K562 (cell line): ENCODE measurements at regions of chr10 and their contacts with region 1.

Region 1: GRCh38 chr10:101602761-101603398 is 14.8 kb downstream of the DPCD start:
- DNase-seq: peak; percentile 72 to 83 (median 76)
- ATAC-seq: peak; percentile 99
- H3K4me3 ChIP-seq: no peak overlapping the region
- H3K27ac ChIP-seq: no peak overlapping the region
- H3K4me1 ChIP-seq: peaks cover 7 to 9% of the 10 kb centered on the region in 2 experiments; a peak in 2 of 5 replicates
- H3K27me3 ChIP-seq: no peaks in the 10 kb centered on the region
- CTCF ChIP-seq: peak; percentile 91 to 97 (median 95)
- EP300 ChIP-seq: no peak
- POLR2A ChIP-seq: no peak
- RAD21 ChIP-seq: peak; percentile 81 to 88

Region 2: GRCh38 chr10:101587725-101588653 is 14.9 kb before region 1 on chr10 and contains the starts of genes DPCD and POLL:
- CTCF ChIA-PET with region 1: no interaction called
- POLR2A ChIA-PET with region 1: no interaction called
- in situ Hi-C with region 1: no loop called
- intact Hi-C with region 1: no loop called
- DNase-seq: peak; percentile 88 to 95 (median 90)
- ATAC-seq: peak; percentile 98
- H3K4me3 ChIP-seq: peak within 1 kb of the TSS; percentile 86
- H3K27ac ChIP-seq: peak within 1 kb of the TSS; percentile 60
- H3K4me1 ChIP-seq: peaks cover 2 to 11% of the 10 kb centered on the region in 2 experiments; a peak in 2 of 5 replicates
- H3K27me3 ChIP-seq: no peaks in the 10 kb centered on the region
- CTCF ChIP-seq: no peak
- EP300 ChIP-seq: no peak
- POLR2A ChIP-seq: peak; percentile 68; the same call in 1 of the 2 replicates
- RAD21 ChIP-seq: no peak
- polyA plus RNA-seq, gene DPCD: 37.6 to 45.2 TPM
- polyA plus RNA-seq, gene POLL: 1.2 to 2.1 TPM

Region 3: DNA sequence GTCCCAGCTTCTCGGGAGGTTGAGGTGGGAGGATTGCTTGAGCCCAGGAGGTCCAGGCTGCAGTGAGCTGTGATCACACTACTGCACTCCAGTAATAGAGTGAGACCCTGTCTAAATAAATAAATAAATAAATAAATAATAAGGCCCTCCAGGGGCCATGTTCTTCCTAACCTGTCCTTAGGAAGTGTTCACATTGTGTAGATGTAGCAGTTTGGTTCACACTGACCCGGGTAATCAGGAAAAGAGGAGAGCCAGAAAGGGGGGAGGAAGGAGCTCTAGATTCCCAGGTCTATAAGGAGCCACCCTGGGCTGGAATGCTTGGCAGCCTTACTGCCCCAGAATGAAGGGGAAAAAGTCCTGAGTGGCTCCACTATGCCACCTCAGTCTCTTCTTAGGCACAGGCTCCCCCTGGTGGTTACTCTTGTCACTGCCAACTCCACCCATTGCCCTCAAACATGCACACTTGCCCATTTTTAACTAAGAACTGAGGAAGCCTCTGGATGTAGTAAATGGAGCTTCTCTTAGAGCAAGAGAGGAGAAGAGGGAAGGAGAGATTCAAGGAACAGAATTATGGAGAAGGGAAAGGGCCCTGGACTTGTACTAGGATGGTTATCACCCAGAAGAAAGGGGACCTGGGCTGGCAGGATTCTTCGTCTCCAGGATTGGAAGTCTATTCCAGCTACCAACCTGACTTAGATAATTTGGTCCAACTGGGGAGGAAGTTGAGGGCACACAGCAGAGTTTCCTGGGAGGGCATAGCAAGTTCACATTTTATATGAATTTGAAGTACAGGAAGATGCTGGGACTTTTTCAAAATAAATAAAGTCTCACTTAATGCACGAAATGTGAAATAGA is 470.0 kb after region 1 on chr10:
- CTCF ChIA-PET with region 1: interaction called, 12 read pairs
- POLR2A ChIA-PET with region 1: interaction called, 3 read pairs
- in situ Hi-C with region 1: loop called (anchors 5 kb)
- intact Hi-C with region 1: loop called (anchors 5 kb)
- DNase-seq: peak; percentile 67 to 79 (median 69)
- ATAC-seq: peak; percentile 93
- H3K4me3 ChIP-seq: no peak overlapping the region
- H3K27ac ChIP-seq: no peak overlapping the region
- H3K4me1 ChIP-seq: peaks cover 3 to 11% of the 10 kb centered on the region in 2 experiments; a peak in 3 of 5 replicates
- H3K27me3 ChIP-seq: no peaks in the 10 kb centered on the region
- CTCF ChIP-seq: peak; percentile 82 to 91 (median 86)
- EP300 ChIP-seq: no peak
- POLR2A ChIP-seq: no peak
- RAD21 ChIP-seq: peak; percentile 89 to 94